ENCODE measurements at regions of chr7 and their contacts with region 1.

Region 1: GRCh38 chr7:44999245-45000095 is 531 bp upstream of the CCM2 start:
- DNase-seq: peak; percentile 100
- H3K4me3 Mint-ChIP-seq: peak overlapping the region; percentile 71
- H3K27ac Mint-ChIP-seq: peak overlapping the region; percentile 60
- H3K4me1 Mint-ChIP-seq: peaks cover 40% of the 10 kb centered on the region
- H3K27me3 Mint-ChIP-seq: no peaks in the 10 kb centered on the region
- CTCF ChIP-seq: no peak

Region 2: GRCh38 chr7:44858161-44858560 is 141.3 kb before region 1 on chr7:
- CTCF ChIA-PET with region 1: interaction called, 10 read pairs
- intact Hi-C with region 1: no loop called
- DNase-seq: no peak
- H3K4me3 Mint-ChIP-seq: no peak overlapping the region
- H3K27ac Mint-ChIP-seq: no peak overlapping the region
- H3K4me1 Mint-ChIP-seq: peaks cover 20% of the 10 kb centered on the region
- H3K27me3 Mint-ChIP-seq: no peaks in the 10 kb centered on the region
- CTCF ChIP-seq: peak; percentile 29

Region 3: GRCh38 chr7:44973610-44974401 is 25.7 kb before region 1 on chr7:
- CTCF ChIA-PET with region 1: interaction called, 21 read pairs
- intact Hi-C with region 1: no loop called
- DNase-seq: peak; percentile 68
- H3K4me3 Mint-ChIP-seq: no peak overlapping the region
- H3K27ac Mint-ChIP-seq: no peak overlapping the region
- H3K4me1 Mint-ChIP-seq: peaks cover 11% of the 10 kb centered on the region
- H3K27me3 Mint-ChIP-seq: peaks cover 17% of the 10 kb centered on the region
- CTCF ChIP-seq: peak; percentile 70

Region 4: GRCh38 chr7:44986218-44987053 is 13.0 kb before region 1 on chr7:
- CTCF ChIA-PET with region 1: interaction called, 18 read pairs
- intact Hi-C with region 1: no loop called
- DNase-seq: peak; percentile 98
- H3K4me3 Mint-ChIP-seq: peak overlapping the region; percentile 86
- H3K27ac Mint-ChIP-seq: peak overlapping the region; percentile 98
- H3K4me1 Mint-ChIP-seq: peaks cover 66% of the 10 kb centered on the region
- H3K27me3 Mint-ChIP-seq: no peaks in the 10 kb centered on the region
- CTCF ChIP-seq: no peak

Region 5: DNA sequence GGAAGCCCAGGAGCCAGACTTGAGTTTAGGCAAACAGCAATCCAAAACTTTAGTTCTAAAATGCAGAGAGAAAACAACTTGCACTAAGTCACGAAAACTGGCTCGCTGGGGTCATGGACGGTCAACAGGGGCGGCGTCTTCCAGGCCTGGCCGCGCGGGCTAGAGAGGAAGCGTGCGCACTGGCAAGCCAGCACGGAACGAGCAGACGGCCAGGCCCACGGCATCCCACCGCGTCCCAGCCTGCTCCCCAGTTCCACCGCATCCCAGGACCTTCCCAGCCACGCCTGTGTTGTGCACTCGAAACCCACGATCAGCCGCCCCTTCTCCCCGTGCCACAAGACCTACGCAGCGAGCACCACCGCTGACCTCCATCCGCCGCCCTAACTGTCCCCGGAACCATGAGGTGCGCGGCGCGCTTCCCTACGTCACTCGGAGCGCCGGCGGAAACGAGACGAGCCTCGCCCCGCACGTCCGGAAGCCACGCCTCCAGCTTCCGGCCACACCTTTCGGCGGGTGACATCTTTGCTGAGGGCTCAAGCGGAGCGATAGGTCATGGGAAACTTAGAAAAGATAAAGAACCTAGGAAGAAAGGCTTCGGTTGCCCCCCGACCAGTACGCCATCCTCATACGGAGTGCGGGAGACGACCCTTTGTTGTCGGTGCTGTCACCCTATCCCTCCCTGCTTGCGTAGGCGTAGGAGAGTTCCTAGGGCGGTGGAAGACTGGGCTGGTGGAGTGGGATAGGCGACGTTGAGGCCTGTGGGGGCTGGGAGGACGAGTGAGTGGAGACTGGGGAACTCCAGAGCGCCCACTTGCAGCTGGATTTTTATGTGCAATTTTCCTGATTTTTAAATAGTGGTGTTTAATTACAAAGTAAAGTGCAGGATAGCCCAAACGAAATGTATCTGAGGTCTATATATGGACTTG is 112.1 kb after region 1 on chr7 and contains the start of gene TBRG4:
- CTCF ChIA-PET with region 1: interaction called, 7 read pairs
- intact Hi-C with region 1: loop called (anchors 5 kb)
- DNase-seq: peak; percentile 98
- H3K4me3 Mint-ChIP-seq: peak within 1 kb of the TSS; percentile 96
- H3K27ac Mint-ChIP-seq: peak within 1 kb of the TSS; percentile 99
- H3K4me1 Mint-ChIP-seq: peaks cover 31% of the 10 kb centered on the region
- H3K27me3 Mint-ChIP-seq: peaks cover 32% of the 10 kb centered on the region
- CTCF ChIP-seq: peak; percentile 21
- total RNA-seq, gene TBRG4: 191 and 199 TPM in 2 replicates